ENCODE measurements at regions of chr11 and their contacts with region 1.

Region 1: DNA sequence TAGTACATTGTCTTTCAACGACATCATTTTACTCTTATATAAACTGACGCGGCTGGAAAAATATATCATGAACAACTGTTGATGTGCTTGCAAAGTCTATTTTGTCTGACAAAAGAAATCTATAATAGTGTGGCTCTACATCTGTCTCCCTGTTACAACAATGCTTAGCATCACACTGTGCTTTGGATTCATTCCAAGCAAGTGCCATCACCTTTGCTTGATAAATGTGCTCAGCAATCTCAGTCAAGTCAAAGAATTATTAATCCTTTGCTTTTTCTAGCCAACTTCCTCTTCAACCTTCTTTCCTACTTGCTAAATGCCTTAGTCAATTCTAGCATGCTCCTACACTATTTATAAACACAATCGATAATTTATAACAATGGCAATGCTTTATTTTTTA is 140.5 kb downstream of the FCHSD2 start:
- DNase-seq: no peak
- ATAC-seq: no peak
- H3K4me3 Mint-ChIP-seq: no peak overlapping the region
- H3K27ac Mint-ChIP-seq: peak overlapping the region; percentile 63
- H3K4me1 Mint-ChIP-seq: peaks cover 71% of the 10 kb centered on the region
- H3K27me3 Mint-ChIP-seq: no peaks in the 10 kb centered on the region
- CTCF ChIP-seq: no peak

Region 2: GRCh38 chr11:72752088-72752914 is 249.3 kb before region 1 on chr11 and contains the start of gene ARAP1:
- CTCF ChIA-PET with region 1: no interaction called
- POLR2A ChIA-PET with region 1: no interaction called
- intact Hi-C with region 1: no loop called
- DNase-seq: peak; percentile 74
- ATAC-seq: peak; percentile 89
- H3K4me3 Mint-ChIP-seq: peak within 1 kb of the TSS; percentile 91
- H3K27ac Mint-ChIP-seq: peak within 1 kb of the TSS; percentile 89
- H3K4me1 Mint-ChIP-seq: peaks cover 53% of the 10 kb centered on the region
- H3K27me3 Mint-ChIP-seq: no peaks in the 10 kb centered on the region
- CTCF ChIP-seq: no peak
- total RNA-seq, gene ARAP1: 113 and 139 TPM in 2 replicates

Region 3: DNA sequence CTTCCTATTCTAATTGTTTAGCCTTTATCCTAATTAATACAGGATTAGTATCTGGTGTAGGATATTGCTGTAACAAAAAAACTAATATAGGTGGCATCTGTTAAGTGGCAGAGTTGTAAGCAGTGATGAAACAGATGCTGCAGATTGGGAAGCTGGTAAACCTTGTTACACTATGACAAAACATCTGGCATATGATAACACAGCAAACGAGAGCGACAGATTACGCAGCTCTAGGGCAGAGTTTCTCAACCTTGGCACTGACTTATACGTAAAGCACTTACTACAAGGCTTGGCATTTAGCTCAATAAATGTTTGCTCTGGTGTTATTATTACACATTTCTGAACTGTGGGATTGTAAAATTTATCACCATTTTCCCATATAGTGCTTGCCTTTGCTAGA is 50.4 kb before region 1 on chr11:
- CTCF ChIA-PET with region 1: no interaction called
- POLR2A ChIA-PET with region 1: no interaction called
- intact Hi-C with region 1: loop called (anchors 10 kb)
- DNase-seq: no peak
- ATAC-seq: no peak
- H3K4me3 Mint-ChIP-seq: peak overlapping the region; percentile 63
- H3K27ac Mint-ChIP-seq: peak overlapping the region; percentile 90
- H3K4me1 Mint-ChIP-seq: peaks cover 69% of the 10 kb centered on the region
- H3K27me3 Mint-ChIP-seq: no peaks in the 10 kb centered on the region
- CTCF ChIP-seq: no peak

Region 4: GRCh38 chr11:72985645-72986044 is 16.0 kb before region 1 on chr11:
- CTCF ChIA-PET with region 1: no interaction called
- POLR2A ChIA-PET with region 1: no interaction called
- intact Hi-C with region 1: loop called (anchors 2 kb)
- DNase-seq: no peak
- ATAC-seq: no peak
- H3K4me3 Mint-ChIP-seq: no peak overlapping the region
- H3K27ac Mint-ChIP-seq: peak overlapping the region; percentile 79
- H3K4me1 Mint-ChIP-seq: peaks cover 69% of the 10 kb centered on the region
- H3K27me3 Mint-ChIP-seq: no peaks in the 10 kb centered on the region
- CTCF ChIP-seq: no peak

Region 5: DNA sequence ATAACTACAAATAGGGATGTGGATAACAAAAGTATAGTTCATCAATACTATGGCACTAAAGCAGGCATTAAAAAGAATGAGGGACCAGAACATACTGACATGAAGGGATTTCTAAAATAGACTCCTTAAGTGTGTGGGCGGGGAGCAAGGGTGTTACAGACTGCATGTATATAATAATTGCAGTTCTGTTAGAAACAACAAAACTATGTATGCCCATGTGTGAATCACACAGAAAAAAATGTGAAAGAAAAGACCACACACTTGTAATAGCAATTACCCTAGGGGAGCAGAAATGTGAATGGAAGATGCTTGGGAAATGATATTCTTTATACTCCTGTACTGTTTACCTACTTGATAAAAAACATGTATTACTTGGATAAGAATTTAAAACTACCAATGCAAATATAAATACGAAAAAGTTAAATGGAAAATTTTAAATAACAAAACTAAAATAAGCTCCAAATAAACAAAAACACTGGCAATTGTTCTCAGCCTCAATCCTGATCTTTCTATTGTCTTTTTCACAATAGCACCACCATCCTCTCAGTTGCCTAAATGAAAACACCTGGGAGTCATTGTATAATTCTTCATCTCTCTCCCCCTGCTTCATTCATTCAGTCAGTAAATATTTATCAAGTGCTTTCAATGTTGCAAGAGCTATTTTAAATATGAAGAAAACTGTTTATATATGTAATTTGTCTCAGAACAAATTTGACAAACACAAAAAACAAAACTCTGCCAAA is 10.7 kb after region 1 on chr11:
- CTCF ChIA-PET with region 1: no interaction called
- POLR2A ChIA-PET with region 1: interaction called, 15 read pairs
- intact Hi-C with region 1: loop called (anchors 2 kb)
- DNase-seq: no peak
- ATAC-seq: no peak
- H3K4me3 Mint-ChIP-seq: no peak overlapping the region
- H3K27ac Mint-ChIP-seq: peak overlapping the region; percentile 53
- H3K4me1 Mint-ChIP-seq: peaks cover 60% of the 10 kb centered on the region
- H3K27me3 Mint-ChIP-seq: no peaks in the 10 kb centered on the region
- CTCF ChIP-seq: no peak

Region 6: GRCh38 chr11:73047773-73048371 is 46.3 kb after region 1 on chr11:
- CTCF ChIA-PET with region 1: no interaction called
- POLR2A ChIA-PET with region 1: no interaction called
- intact Hi-C with region 1: loop called (anchors 5 kb)
- DNase-seq: no peak
- ATAC-seq: peak; percentile 85
- H3K4me3 Mint-ChIP-seq: peak overlapping the region; percentile 64
- H3K27ac Mint-ChIP-seq: peak overlapping the region; percentile 93
- H3K4me1 Mint-ChIP-seq: peaks cover 74% of the 10 kb centered on the region
- H3K27me3 Mint-ChIP-seq: no peaks in the 10 kb centered on the region
- CTCF ChIP-seq: no peak

Region 7: GRCh38 chr11:73218106-73218829 is 216.7 kb after region 1 on chr11 and contains the start of gene P2RY2:
- CTCF ChIA-PET with region 1: no interaction called
- POLR2A ChIA-PET with region 1: no interaction called
- intact Hi-C with region 1: no loop called
- DNase-seq: peak; percentile 58
- ATAC-seq: peak; percentile 83
- H3K4me3 Mint-ChIP-seq: peak within 1 kb of the TSS; percentile 74
- H3K27ac Mint-ChIP-seq: no peak within 1 kb of the TSS
- H3K4me1 Mint-ChIP-seq: peaks cover 24% of the 10 kb centered on the region
- H3K27me3 Mint-ChIP-seq: peaks cover 23% of the 10 kb centered on the region
- CTCF ChIP-seq: no peak
- total RNA-seq, gene P2RY2: 0.22 and 0.42 TPM in 2 replicates

Measured in activated B cell treated with CpG ODN at 0.5 μM for 24 hours (primary cell).